ENCODE measurements at regions of chr9 and their contacts with region 1.

Region 1: DNA sequence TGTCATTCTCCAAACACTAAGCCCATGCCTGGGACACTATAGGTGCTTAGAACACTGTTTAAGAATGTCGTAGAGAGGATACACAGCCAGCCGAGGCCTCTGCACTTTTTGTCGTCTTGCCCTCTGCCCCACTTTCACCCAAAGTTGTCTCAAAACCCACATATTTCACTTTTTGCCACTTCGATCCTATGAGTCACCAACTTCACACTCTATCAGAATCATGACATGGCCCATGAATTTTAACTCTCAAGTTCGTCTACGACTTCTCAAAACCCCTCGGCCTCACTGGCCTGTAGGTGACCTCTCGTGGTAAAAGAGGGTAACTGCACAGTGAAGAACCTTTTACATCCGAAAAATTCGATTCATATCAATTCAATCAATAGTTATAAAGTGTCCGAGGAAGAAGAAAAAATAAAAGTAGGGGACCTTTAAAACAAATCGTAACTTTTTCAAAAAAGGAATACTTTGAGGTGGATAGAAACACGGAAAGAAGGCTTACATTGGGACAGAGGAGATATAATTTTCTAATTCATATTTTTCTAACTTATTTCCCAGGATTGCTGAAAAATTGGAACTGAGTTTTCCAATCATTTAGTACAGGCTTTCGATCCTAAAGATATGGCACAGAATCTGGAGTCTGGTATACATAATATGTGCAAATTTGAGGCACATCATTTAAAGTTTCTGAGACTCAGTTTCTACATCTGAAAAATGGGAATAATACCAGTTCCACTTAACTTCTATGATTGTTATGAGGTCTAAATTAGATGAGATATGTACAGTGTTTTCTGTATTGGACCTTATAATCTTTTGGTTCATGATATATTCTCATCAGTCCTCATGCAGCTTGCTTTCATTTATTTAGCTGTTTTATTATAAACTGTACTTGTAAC is 122.6 kb downstream of the APBA1 start:
- DNase-seq: peak in 5 of 9 donors; percentile 10 to 42 (median 25)
- ATAC-seq: peak; percentile 75
- H3K4me3 ChIP-seq: no peak overlapping the region
- H3K4me3 Mint-ChIP-seq: no peak overlapping the region
- H3K27ac ChIP-seq: no peak overlapping the region
- H3K27ac Mint-ChIP-seq: no peak overlapping the region
- H3K4me1 ChIP-seq: no peaks in the 10 kb centered on the region
- H3K4me1 Mint-ChIP-seq: peaks cover 0 to 6% (median 4%) of the 10 kb centered on the region in 7 donors
- H3K27me3 ChIP-seq: no peaks in the 10 kb centered on the region
- H3K27me3 Mint-ChIP-seq: peaks cover 10 to 44% (median 18%) of the 10 kb centered on the region in 5 donors

Region 2: DNA sequence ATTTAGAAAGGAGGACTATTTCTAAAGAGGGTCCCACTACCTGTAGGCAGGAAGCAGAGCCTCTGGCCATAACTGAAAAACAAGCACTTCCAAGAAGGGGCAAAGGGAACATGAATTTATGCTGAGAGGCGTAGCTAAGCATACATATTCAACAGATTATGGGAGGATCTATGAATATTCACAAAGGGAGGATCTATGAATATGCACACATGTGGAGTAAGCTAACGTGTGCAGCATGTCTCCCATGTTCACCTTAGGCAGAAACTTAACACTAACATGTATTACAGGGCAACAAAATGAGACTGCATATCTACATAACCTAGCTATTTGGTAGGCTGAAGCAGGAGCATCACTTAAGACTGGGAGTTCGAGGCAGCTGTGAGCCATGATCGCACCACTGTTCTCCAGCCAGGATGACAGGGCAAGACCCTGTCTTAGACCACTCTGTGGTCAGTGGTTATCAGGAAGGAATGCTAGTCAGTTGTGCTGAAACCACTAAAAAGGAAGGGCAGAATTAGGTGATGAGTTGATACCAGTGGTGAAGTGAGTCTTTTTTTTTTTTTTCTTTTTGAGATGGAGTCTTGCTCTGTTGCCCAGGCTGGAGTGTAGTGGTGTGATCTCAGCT is 493.3 kb before region 1 on chr9:
- CTCF ChIA-PET with region 1: no interaction called
- POLR2A ChIA-PET with region 1: no interaction called
- intact Hi-C with region 1: loop called in 1 of 2 experiments (anchors 10 kb)
- DNase-seq: no peak
- ATAC-seq: no peak
- H3K4me3 ChIP-seq: no peak overlapping the region
- H3K4me3 Mint-ChIP-seq: peak overlapping the region in 1 of 10 donors; percentile 16
- H3K27ac ChIP-seq: no peak overlapping the region
- H3K27ac Mint-ChIP-seq: peak overlapping the region in 1 of 9 donors; percentile 68
- H3K4me1 ChIP-seq: no peaks in the 10 kb centered on the region
- H3K4me1 Mint-ChIP-seq: peaks cover 0 to 25% (median 6%) of the 10 kb centered on the region in 7 donors
- H3K27me3 ChIP-seq: no peaks in the 10 kb centered on the region
- H3K27me3 Mint-ChIP-seq: no peaks in the 10 kb centered on the region

Region 3: DNA sequence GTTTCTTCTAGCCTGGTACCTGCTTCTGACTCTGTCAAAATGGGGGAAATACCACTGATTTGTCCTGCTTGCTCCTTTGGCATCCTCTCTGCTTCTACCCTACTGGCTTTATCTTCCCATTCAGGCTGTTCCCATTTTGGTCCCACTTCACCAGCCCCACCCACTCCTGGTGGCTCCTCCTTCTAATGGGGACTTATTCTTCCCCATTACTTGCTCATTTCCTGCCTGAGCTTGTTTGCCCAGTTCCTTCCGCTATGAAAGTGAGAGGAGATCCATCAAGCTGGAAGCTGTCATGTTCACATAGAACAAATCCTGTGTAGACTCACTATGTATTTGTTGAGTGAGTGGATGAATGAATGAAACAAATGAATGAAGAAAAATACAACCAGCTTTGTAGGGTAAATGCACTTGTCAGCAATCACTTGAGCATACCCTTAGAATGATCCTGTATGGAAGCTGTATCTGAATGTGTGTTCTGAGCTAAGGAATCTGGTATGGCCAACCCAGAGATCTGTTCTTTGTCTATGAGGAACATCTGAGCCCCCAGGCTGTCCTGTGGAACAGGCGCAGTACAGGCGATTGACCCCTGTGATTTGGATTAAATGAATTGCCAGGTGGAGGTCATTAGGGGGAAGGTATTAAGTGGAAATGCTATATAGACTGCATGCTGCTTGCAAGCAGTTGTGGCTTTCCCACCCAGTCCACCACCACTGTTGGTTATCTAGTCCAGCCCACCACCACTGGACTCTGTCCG is 33.2 kb after region 1 on chr9:
- CTCF ChIA-PET with region 1: no interaction called
- POLR2A ChIA-PET with region 1: no interaction called
- intact Hi-C with region 1: no loop called
- DNase-seq: no peak
- ATAC-seq: peak; percentile 62
- H3K4me3 ChIP-seq: no peak overlapping the region
- H3K4me3 Mint-ChIP-seq: no peak overlapping the region
- H3K27ac ChIP-seq: no peak overlapping the region
- H3K27ac Mint-ChIP-seq: no peak overlapping the region
- H3K4me1 ChIP-seq: no peaks in the 10 kb centered on the region
- H3K4me1 Mint-ChIP-seq: peaks cover 0 to 6% (median 0%) of the 10 kb centered on the region in 7 donors
- H3K27me3 ChIP-seq: no peaks in the 10 kb centered on the region
- H3K27me3 Mint-ChIP-seq: peaks cover 5 to 16% (median 8%) of the 10 kb centered on the region in 5 donors

Region 4: DNA sequence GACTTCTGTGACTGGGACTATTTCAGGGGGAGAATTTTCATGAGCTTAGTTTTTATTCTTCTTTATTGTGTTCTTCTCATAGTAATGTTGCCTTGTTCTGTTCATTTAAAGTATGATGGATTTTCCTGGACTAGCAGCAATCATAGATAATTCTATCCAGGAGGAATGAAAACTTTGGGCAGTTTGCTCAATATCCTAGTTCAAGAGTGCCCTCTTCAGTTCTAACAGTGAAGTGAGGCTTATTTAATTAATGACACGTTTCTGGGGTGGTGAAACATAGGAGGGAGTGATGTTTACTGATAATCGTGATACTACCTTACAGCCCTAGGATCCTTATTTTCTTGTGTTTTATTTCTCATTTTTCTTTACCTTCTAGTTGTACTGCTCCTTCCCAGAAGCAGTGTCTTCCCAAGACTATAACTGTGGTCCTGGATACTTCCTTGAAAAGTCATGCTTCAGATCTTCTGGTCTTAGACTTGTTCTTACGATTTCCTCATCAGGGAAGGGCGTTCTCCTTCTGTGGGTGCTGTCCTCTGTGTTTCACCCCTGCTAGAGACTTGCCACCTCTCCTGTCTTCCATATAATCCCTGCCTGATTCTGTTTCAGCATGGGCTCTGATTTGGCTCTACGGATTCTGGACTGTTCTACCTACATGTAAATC is 328.4 kb after region 1 on chr9:
- CTCF ChIA-PET with region 1: no interaction called
- POLR2A ChIA-PET with region 1: no interaction called
- intact Hi-C with region 1: loop called in 1 of 2 experiments (anchors 1 kb)
- DNase-seq: peak in 5 of 9 donors; percentile 2 to 25 (median 6)
- ATAC-seq: no peak
- H3K4me3 ChIP-seq: no peak overlapping the region
- H3K4me3 Mint-ChIP-seq: no peak overlapping the region
- H3K27ac ChIP-seq: no peak overlapping the region
- H3K27ac Mint-ChIP-seq: no peak overlapping the region
- H3K4me1 ChIP-seq: no peaks in the 10 kb centered on the region
- H3K4me1 Mint-ChIP-seq: no peaks in the 10 kb centered on the region
- H3K27me3 ChIP-seq: no peaks in the 10 kb centered on the region
- H3K27me3 Mint-ChIP-seq: peaks cover 0 to 37% (median 2%) of the 10 kb centered on the region in 5 donors